ENCODE measurements at regions of chr22 and their contacts with region 1.

Region 1: GRCh38 chr22:42704896-42705295 is 15.8 kb downstream of the A4GALT start:
- DNase-seq: no peak
- H3K4me3 ChIP-seq: no peak overlapping the region
- H3K27ac ChIP-seq: peak overlapping the region; percentile 37
- H3K4me1 ChIP-seq: peaks cover 8% of the 10 kb centered on the region
- H3K27me3 ChIP-seq: no peaks in the 10 kb centered on the region
- CTCF ChIP-seq: no peak

Region 2: GRCh38 chr22:43209523-43209890 is 504.6 kb after region 1 on chr22:
- CTCF ChIA-PET with region 1: no interaction called
- POLR2A ChIA-PET with region 1: interaction called, 15 read pairs
- intact Hi-C with region 1: no loop called
- DNase-seq: no peak
- H3K4me3 ChIP-seq: no peak overlapping the region
- H3K27ac ChIP-seq: no peak overlapping the region
- H3K4me1 ChIP-seq: no peaks in the 10 kb centered on the region
- H3K27me3 ChIP-seq: no peaks in the 10 kb centered on the region
- CTCF ChIP-seq: no peak